Pancreas (tissue), 10 donors: ENCODE measurements at regions of chr6 and their contacts with region 1.

Region 1: GRCh38 chr6:119110601-119111548 is 32.4 kb upstream of the FAM184A start:
- DNase-seq: peak in 3 of 6 donors; percentile 24 to 58 (median 27)
- ATAC-seq: peak; percentile 93 to 99 (median 96)
- H3K4me3 ChIP-seq: no peak overlapping the region
- H3K27ac ChIP-seq: no peak overlapping the region
- H3K4me1 ChIP-seq: no peaks in the 10 kb centered on the region
- H3K27me3 ChIP-seq: no peaks in the 10 kb centered on the region
- CTCF ChIP-seq: peak in 3 of 4 donors; percentile 35 to 46 (median 35)

Region 2: DNA sequence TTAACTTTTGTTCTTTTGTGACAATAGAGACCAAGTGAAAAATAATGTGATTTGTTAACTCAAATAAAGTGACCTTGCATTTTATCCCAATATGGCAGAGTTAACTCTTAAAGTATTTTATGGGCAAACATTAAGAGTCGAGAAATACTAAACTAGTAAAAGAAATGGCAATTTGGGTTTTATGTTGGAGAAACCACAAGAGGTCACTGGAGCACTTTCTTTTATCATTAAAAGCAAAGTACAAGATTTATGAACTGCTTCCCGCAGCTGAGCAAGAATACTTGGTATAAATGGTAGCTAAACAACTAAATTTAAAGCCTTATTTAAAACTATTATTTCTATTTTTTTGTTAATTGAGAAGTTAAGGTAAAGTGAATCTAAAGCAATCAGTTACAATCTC is 142.5 kb before region 1 on chr6:
- intact Hi-C with region 1: loop called in 2 of 3 experiments (anchors 10 kb)
- DNase-seq: no peak
- ATAC-seq: peak in 3 of 4 donors; percentile 49 to 67 (median 59)
- H3K4me3 ChIP-seq: no peak overlapping the region
- H3K27ac ChIP-seq: no peak overlapping the region
- H3K4me1 ChIP-seq: no peaks in the 10 kb centered on the region
- H3K27me3 ChIP-seq: no peaks in the 10 kb centered on the region
- CTCF ChIP-seq: peak in 1 of 4 donors; percentile 21

Region 3: GRCh38 chr6:118999494-119000040 is 111.3 kb before region 1 on chr6:
- intact Hi-C with region 1: no loop called
- DNase-seq: no peak
- ATAC-seq: no peak
- H3K4me3 ChIP-seq: no peak overlapping the region
- H3K27ac ChIP-seq: no peak overlapping the region
- H3K4me1 ChIP-seq: no peaks in the 10 kb centered on the region
- H3K27me3 ChIP-seq: no peaks in the 10 kb centered on the region
- CTCF ChIP-seq: no peak